ENCODE measurements at regions of chr10 and their contacts with region 1.

Region 1: DNA sequence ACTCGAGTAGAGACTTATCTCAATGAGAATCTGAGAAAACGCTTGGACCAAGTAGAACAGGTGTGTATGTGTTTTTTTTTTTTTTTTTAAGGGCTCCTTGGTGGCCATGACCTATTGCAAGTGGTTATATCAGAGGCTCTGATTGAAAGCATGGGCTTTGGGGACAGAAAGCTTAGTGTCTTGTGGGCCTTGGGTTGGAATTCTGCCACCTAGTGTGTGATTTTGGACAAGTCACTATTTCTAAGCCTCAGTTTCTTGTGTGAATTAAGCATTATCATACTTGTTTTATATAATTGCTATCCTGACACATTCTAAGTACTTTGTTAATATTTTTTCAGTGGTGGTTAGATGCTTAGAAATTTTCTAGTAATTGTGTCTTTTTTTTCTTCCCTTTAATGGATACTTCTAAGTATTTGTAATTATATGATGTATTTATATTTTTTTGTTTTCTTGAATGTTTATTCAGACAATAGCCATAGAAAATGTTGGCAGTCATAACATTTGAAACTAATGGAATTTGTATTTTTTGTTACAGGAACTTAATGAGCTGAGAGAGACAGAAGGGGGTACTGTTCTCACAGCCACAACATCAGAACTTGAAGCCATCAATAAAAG is 33.1 kb downstream of the SMC3 start:
- DNase-seq: no peak
- ATAC-seq: peak; percentile 95
- H3K4me3 ChIP-seq: no peak overlapping the region
- H3K27ac ChIP-seq: no peak overlapping the region
- H3K4me1 ChIP-seq: no peaks in the 10 kb centered on the region
- H3K27me3 ChIP-seq: no peaks in the 10 kb centered on the region
- CTCF ChIP-seq: peak; percentile 40 to 58 (median 54); a peak in 5 of 6 replicates
- EP300 ChIP-seq: no peak
- POLR2A ChIP-seq: no peak
- RAD21 ChIP-seq: peak; percentile 54; the same call in 1 of the 2 replicates

Region 2: DNA sequence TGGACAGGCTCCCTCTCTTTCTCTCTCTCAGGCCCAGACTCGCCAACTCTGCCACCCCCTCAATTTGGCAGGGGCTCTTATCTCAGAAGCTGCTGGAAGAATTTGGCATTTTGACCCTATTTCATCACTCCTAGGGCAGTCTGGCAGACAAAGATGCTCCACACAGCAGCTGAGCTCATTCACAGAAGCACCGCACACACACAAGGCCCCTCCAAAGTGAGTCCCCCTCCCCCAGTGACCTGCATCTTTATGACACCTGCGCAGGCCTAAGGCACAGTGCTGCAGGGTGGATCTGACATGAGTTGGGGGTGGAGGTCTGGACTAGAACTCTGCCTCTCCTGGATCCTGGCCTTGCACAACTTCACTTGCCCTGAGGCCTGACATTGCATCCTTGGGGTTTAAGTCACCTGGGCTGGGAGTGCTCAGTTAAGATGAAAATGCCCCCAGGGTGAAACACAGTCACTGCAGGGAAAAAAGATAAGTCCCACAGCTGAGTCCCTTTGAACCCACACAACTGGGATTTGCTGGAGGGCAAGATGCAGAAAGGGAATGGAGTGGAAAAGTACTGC is 144.0 kb before region 1 on chr10:
- CTCF ChIA-PET with region 1: no interaction called
- POLR2A ChIA-PET with region 1: no interaction called
- RAD21 ChIA-PET with region 1: no interaction called
- SMC1A ChIA-PET with region 1: no interaction called
- in situ Hi-C with region 1: no loop called
- intact Hi-C with region 1: no loop called
- DNase-seq: no peak
- ATAC-seq: no peak
- H3K4me3 ChIP-seq: no peak overlapping the region
- H3K27ac ChIP-seq: no peak overlapping the region
- H3K4me1 ChIP-seq: peaks cover 38% of the 10 kb centered on the region
- H3K27me3 ChIP-seq: no peaks in the 10 kb centered on the region
- CTCF ChIP-seq: no peak
- EP300 ChIP-seq: no peak
- POLR2A ChIP-seq: no peak
- RAD21 ChIP-seq: no peak

Region 3: DNA sequence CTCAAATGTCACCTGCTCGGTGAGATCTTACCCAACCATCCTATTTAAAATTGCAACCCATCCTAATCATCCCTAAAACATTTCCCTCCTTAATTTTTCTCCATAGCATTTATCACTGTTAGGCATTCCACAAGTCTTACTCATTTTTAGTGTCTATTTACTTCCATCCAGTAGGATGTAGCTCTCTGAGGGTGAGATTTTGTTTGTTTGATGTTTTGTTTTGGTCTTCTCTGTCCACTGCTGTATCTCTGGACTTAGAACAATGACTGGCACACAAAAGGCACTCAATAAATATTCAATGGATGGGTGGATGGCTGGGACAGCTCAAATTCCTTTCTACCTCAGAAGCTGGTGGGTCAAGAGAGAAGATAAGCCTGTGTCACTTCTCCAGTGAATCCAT is 118.7 kb before region 1 on chr10:
- CTCF ChIA-PET with region 1: no interaction called
- POLR2A ChIA-PET with region 1: no interaction called
- RAD21 ChIA-PET with region 1: no interaction called
- SMC1A ChIA-PET with region 1: no interaction called
- in situ Hi-C with region 1: no loop called
- intact Hi-C with region 1: no loop called
- DNase-seq: no peak
- ATAC-seq: no peak
- H3K4me3 ChIP-seq: no peak overlapping the region
- H3K27ac ChIP-seq: no peak overlapping the region
- H3K4me1 ChIP-seq: peaks cover 5% of the 10 kb centered on the region
- H3K27me3 ChIP-seq: no peaks in the 10 kb centered on the region
- CTCF ChIP-seq: no peak
- EP300 ChIP-seq: no peak
- POLR2A ChIP-seq: no peak
- RAD21 ChIP-seq: no peak

Region 4: GRCh38 chr10:110556969-110557601 is 43.5 kb before region 1 on chr10:
- CTCF ChIA-PET with region 1: interaction called, 19 read pairs
- POLR2A ChIA-PET with region 1: no interaction called
- RAD21 ChIA-PET with region 1: interaction called, 5 read pairs
- SMC1A ChIA-PET with region 1: no interaction called
- in situ Hi-C with region 1: no loop called
- intact Hi-C with region 1: loop called (anchors 2 kb)
- DNase-seq: no peak
- ATAC-seq: peak; percentile 99
- H3K4me3 ChIP-seq: no peak overlapping the region
- H3K27ac ChIP-seq: no peak overlapping the region
- H3K4me1 ChIP-seq: no peaks in the 10 kb centered on the region
- H3K27me3 ChIP-seq: no peaks in the 10 kb centered on the region
- CTCF ChIP-seq: peak; percentile 77 to 87 (median 83)
- EP300 ChIP-seq: no peak
- POLR2A ChIP-seq: no peak
- RAD21 ChIP-seq: peak; percentile 58

Region 5: GRCh38 chr10:110584006-110584405 is 16.6 kb before region 1 on chr10:
- CTCF ChIA-PET with region 1: interaction called, 6 read pairs
- POLR2A ChIA-PET with region 1: interaction called, 3 read pairs
- RAD21 ChIA-PET with region 1: interaction called, 3 read pairs
- SMC1A ChIA-PET with region 1: interaction called, 11 read pairs
- in situ Hi-C with region 1: no loop called
- intact Hi-C with region 1: no loop called
- DNase-seq: no peak
- ATAC-seq: no peak
- H3K4me3 ChIP-seq: no peak overlapping the region
- H3K27ac ChIP-seq: no peak overlapping the region
- H3K4me1 ChIP-seq: no peaks in the 10 kb centered on the region
- H3K27me3 ChIP-seq: no peaks in the 10 kb centered on the region
- CTCF ChIP-seq: no peak
- EP300 ChIP-seq: no peak
- POLR2A ChIP-seq: no peak
- RAD21 ChIP-seq: no peak

Region 6: DNA sequence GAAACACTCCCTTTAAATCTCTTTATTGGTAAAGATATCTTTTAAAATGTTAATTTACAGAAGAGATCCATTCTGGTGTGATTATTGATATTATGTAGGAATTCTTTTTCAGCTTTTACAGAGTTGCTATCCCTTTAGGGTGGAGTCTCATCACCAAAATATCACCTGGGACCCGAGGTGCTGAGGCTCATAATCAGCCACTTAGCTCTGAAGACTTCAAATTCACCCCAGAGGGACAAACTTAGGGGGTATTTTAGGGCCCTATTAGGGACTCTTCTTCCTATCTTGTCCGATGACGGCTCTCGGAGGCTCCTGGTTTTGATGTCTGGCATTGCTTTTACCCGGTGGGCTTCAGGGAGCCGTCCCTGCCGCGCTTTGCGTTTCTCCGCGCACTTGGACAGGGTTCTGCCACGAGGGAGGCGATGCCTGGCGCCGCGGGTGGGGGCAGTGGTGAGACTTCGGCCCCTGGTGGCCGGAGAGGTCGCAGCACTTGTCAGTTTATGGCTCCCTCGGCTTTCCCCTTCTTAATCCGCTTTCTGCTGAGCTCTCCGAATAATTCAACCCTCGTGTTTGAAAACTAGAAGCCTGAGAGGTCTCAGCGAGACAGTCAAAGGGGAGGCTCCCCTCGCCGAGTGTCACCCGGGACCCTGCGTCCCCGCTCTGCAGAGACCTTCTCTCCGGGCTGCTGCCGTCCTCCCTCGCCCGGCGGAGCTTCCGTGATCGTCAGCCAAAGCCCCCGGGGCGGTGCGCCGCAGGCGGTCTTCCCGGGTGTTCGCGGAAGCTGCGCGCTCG is 71.4 kb after region 1 on chr10:
- CTCF ChIA-PET with region 1: interaction called, 15 read pairs
- POLR2A ChIA-PET with region 1: no interaction called
- RAD21 ChIA-PET with region 1: no interaction called
- SMC1A ChIA-PET with region 1: interaction called, 3 read pairs
- in situ Hi-C with region 1: no loop called
- intact Hi-C with region 1: no loop called
- DNase-seq: peak; percentile 27
- ATAC-seq: peak; percentile 99
- H3K4me3 ChIP-seq: peak overlapping the region; percentile 74
- H3K27ac ChIP-seq: peak overlapping the region; percentile 62
- H3K4me1 ChIP-seq: no peaks in the 10 kb centered on the region
- H3K27me3 ChIP-seq: no peaks in the 10 kb centered on the region
- CTCF ChIP-seq: peak; percentile 99 to 100 (median 99)
- EP300 ChIP-seq: no peak
- POLR2A ChIP-seq: peak; percentile 80
- RAD21 ChIP-seq: peak; percentile 64

Region 7: GRCh38 chr10:110681023-110681681 is 80.6 kb after region 1 on chr10:
- CTCF ChIA-PET with region 1: interaction called, 10 read pairs
- POLR2A ChIA-PET with region 1: no interaction called
- RAD21 ChIA-PET with region 1: no interaction called
- SMC1A ChIA-PET with region 1: interaction called, 4 read pairs
- in situ Hi-C with region 1: no loop called
- intact Hi-C with region 1: no loop called
- DNase-seq: no peak
- ATAC-seq: peak; percentile 89
- H3K4me3 ChIP-seq: no peak overlapping the region
- H3K27ac ChIP-seq: no peak overlapping the region
- H3K4me1 ChIP-seq: no peaks in the 10 kb centered on the region
- H3K27me3 ChIP-seq: no peaks in the 10 kb centered on the region
- CTCF ChIP-seq: peak; percentile 49 to 64 (median 55)
- EP300 ChIP-seq: no peak
- POLR2A ChIP-seq: no peak
- RAD21 ChIP-seq: peak; percentile 27; the same call in 1 of the 2 replicates

Measured in GM12878 (cell line).